ENCODE measurements at regions of chr11 and their contacts with region 1.

Region 1: DNA sequence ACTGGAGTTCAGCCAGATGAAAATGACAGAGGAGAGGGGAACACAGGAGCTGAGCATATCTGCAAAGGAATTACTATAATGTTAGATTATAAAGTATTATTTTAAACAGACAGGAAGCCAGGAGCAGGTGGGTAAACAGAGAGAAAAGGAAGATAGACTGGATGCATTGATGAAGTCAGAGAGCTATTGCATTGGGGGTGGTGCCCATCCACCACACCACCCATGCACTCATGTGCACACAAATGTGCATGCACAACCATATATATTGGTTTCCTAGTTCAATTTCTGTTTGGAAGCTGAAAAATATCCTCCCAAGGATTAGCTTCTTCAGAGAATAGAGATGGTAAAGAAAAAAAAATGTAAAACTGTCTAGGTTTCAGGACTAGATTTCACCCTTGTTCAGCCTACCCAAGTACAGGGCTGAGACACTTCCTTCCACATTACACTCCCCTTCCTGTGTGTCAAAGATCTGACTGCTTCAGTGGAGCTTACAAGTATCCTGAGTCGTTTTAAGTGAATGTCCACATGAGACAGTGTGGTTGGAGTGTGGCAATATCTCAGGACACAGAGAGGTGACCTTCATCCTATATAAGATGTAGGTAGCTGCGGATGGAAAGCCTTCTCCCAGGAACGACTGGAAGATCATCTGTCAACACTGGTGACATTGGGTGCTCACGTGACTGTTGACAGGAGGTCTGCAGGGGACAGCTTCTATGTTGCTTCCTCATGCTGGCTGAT is 12.2 kb upstream of the SMPD1 start:
- DNase-seq: peak; percentile 37
- H3K4me3 Mint-ChIP-seq: peak overlapping the region; percentile 45
- H3K27ac Mint-ChIP-seq: peak overlapping the region; percentile 90
- H3K4me1 Mint-ChIP-seq: peaks cover 37% of the 10 kb centered on the region
- H3K27me3 Mint-ChIP-seq: no peaks in the 10 kb centered on the region

Region 2: GRCh38 chr11:6362873-6363678 is 15.0 kb before region 1 on chr11:
- CTCF ChIA-PET with region 1: interaction called, 32 read pairs
- POLR2A ChIA-PET with region 1: no interaction called
- DNase-seq: peak; percentile 78
- H3K4me3 Mint-ChIP-seq: no peak overlapping the region
- H3K27ac Mint-ChIP-seq: no peak overlapping the region
- H3K4me1 Mint-ChIP-seq: no peaks in the 10 kb centered on the region
- H3K27me3 Mint-ChIP-seq: no peaks in the 10 kb centered on the region

Region 3: DNA sequence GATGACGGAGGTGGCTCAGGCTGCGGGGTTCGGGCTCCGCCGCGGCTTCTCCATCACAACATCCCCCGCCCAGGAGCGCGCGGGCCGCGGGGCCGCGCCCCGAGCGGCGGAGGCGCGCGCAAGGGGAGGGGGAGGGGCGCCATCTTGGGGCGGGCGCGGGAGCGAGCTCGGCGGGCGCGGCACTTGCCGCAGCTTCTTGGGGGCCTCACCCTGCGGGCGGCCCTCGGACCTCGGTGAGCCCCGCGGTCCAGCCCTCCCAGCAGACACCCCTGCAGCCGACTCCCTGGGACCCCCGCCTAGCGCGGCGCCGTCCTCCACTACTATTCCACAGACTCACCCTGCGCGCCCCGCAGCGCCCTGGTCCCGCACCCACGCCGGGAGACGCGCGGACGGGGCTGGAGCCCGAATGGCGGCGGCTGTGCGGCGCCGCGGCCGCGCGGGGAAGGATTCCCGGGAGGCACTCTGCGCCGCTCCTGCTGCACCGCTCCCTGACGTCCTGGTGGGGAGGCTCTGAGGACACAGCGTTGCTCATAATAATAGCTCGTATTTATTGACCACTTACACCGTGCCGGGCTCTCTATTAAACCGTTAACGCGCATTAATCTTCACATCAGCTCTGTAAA is 41.0 kb after region 1 on chr11 and contains the start of gene APBB1:
- CTCF ChIA-PET with region 1: interaction called, 12 read pairs
- POLR2A ChIA-PET with region 1: no interaction called
- DNase-seq: peak; percentile 64
- H3K4me3 Mint-ChIP-seq: peak within 1 kb of the TSS; percentile 76
- H3K27ac Mint-ChIP-seq: peak within 1 kb of the TSS; percentile 63
- H3K4me1 Mint-ChIP-seq: peaks cover 7% of the 10 kb centered on the region
- H3K27me3 Mint-ChIP-seq: peaks cover 32% of the 10 kb centered on the region
- total RNA-seq, gene APBB1: 58.2 to 61.3 TPM

Region 4: DNA sequence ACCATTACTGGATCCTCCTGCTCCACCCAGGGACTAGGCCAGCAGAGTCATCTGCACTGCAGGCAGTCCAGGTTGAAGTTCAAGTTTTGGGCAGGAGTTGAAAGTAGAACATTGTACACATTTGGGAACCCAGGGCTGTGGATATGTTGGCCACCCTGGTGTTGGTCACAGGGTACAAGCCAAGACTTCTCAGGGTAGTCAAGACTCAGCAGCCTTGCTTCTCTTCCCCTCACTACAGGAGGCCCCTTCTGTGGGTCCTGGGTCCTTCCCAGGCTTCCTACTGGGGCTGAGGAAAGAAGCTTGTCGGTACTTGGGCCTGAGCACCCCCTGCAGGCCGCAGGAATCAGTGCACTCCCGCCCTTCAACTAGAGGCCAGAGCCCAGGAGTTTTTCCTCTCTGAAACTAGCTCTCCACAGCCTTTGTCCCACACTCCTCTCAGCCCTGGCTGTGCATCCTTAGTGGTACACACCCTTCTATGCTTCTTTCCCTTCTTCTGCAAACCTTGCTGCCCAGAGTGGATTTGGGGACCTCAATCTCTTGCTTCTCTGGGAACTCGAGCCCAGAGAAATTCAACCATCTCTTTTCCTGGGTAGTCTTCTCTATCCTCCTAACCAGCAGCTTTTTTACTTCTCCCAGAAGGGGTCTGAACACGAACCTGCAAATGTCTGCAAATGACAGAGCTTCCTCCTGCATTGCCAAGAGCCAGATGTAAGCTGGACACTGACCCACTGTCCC is 65.4 kb after region 1 on chr11:
- CTCF ChIA-PET with region 1: interaction called, 72 read pairs
- POLR2A ChIA-PET with region 1: interaction called, 17 read pairs
- DNase-seq: peak; percentile 64
- H3K4me3 Mint-ChIP-seq: no peak overlapping the region
- H3K27ac Mint-ChIP-seq: no peak overlapping the region
- H3K4me1 Mint-ChIP-seq: no peaks in the 10 kb centered on the region
- H3K27me3 Mint-ChIP-seq: peaks cover 2% of the 10 kb centered on the region

Region 5: DNA sequence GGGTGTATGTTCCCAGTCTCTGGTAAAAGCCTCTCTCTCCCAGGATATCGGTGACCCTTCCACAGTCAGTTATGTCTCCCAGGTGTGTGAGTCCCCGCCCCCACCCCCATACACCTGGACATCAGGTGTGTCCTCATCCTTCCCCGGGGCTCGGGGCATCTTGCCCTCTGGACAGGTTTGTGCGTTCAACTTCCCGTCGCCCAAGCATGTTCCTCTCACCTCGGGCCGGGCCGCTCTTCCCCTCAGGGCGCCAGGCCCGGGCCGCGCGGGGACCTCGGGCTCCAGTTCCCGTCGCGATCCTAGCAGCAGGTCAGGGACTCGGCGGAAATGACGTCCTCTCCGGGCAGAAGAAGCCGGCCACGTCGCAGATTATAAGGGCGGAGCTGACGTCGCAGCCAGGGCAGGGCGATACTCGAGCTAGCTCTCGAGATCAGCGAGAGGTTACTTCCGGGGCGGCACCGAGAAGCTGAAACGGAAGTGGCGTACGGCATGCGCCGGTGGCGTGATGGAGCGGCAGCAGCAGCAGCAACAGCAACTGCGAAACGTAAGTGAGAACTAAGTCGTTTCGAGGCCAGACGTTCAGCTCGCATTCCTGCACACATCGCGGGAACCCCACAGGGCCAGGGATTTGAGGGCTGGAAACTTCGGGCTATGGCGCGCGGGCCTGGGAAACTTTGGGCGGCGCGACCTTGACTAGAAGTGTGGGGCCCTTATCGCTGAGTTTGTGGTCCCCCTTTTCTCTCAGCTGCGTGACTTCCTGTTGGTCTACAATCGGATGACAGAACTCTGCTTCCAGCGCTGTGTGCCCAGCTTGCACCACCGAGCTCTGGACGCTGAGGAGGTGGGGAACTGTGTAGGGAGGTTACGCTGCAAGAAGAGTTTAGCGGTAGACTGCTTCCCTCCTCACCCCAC is 103.2 kb after region 1 on chr11 and contains the starts of genes ARFIP2 and TIMM10B:
- CTCF ChIA-PET with region 1: interaction called, 14 read pairs
- POLR2A ChIA-PET with region 1: no interaction called
- DNase-seq: peak; percentile 98
- H3K4me3 Mint-ChIP-seq: peak within 1 kb of the TSS; percentile 82
- H3K27ac Mint-ChIP-seq: peak within 1 kb of the TSS; percentile 93
- H3K4me1 Mint-ChIP-seq: peaks cover 37% of the 10 kb centered on the region
- H3K27me3 Mint-ChIP-seq: no peaks in the 10 kb centered on the region
- total RNA-seq, gene ARFIP2: 39.0 to 40.6 TPM
- total RNA-seq, gene TIMM10B: 25.6 to 27.0 TPM

Region 6: DNA sequence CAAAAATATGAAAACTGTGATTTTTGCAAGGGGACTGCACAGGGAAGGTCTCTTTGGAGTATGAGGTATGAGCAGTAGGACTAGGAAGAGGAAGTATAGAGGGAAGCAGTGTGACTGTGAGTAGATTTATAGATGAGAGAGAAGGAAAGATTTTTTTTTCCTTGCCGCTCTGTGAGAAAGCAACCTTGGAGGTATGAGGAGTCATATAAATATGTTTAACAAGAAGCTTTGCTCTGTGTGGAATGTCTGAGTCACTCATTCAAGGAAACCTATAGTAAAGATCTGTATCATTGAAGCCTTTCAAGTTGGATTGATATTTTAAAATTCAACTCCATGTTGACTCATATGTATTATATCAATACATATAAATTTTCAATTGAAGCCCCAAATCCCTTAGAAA is 145.2 kb after region 1 on chr11:
- CTCF ChIA-PET with region 1: interaction called, 11 read pairs
- POLR2A ChIA-PET with region 1: no interaction called
- DNase-seq: no peak
- H3K4me3 Mint-ChIP-seq: no peak overlapping the region
- H3K27ac Mint-ChIP-seq: no peak overlapping the region
- H3K4me1 Mint-ChIP-seq: peaks cover 36% of the 10 kb centered on the region
- H3K27me3 Mint-ChIP-seq: no peaks in the 10 kb centered on the region